ENCODE measurements at regions of chr15 and their contacts with region 1.

Region 1: GRCh38 chr15:73697033-73697467 is 12.9 kb downstream of the CD276 start:
- H3K4me3 Mint-ChIP-seq: no peak overlapping the region
- H3K27ac Mint-ChIP-seq: peak overlapping the region; percentile 80
- H3K4me1 Mint-ChIP-seq: peaks cover 83% of the 10 kb centered on the region
- H3K27me3 Mint-ChIP-seq: peaks cover 72% of the 10 kb centered on the region

Region 2: DNA sequence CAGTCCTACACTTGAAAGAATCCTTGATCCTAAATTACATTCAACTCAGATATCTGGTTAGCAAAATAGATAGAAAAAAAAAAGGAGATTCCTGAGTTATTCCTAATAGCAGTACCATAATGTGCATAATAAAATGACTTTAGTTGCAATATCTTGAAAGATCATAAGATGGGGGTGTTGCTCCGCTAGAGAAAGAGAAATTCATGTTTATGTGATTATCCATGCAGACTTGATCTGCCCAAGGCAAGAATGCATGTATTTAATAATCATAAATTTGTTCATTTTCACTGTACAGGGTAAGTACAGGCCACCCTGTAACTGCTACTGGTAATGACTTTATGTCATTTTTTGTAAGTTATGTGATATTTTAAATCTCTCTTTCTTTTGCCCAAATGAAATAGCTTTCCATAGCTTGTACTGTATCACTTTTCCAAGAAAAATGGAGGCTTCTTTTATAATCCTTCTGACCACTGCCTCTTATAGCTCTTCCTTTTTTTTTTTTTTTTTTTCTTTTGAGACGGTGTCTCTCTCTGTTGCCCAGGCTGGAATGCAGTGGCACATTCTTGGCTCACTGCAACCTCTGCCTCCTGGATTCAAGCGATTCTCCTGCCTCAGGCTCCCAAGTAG is 412.8 kb before region 1 on chr15:
- intact Hi-C with region 1: loop called (anchors 5 kb)
- H3K4me3 Mint-ChIP-seq: no peak overlapping the region
- H3K27ac Mint-ChIP-seq: no peak overlapping the region
- H3K4me1 Mint-ChIP-seq: peaks cover 33% of the 10 kb centered on the region
- H3K27me3 Mint-ChIP-seq: peaks cover 18% of the 10 kb centered on the region

Region 3: DNA sequence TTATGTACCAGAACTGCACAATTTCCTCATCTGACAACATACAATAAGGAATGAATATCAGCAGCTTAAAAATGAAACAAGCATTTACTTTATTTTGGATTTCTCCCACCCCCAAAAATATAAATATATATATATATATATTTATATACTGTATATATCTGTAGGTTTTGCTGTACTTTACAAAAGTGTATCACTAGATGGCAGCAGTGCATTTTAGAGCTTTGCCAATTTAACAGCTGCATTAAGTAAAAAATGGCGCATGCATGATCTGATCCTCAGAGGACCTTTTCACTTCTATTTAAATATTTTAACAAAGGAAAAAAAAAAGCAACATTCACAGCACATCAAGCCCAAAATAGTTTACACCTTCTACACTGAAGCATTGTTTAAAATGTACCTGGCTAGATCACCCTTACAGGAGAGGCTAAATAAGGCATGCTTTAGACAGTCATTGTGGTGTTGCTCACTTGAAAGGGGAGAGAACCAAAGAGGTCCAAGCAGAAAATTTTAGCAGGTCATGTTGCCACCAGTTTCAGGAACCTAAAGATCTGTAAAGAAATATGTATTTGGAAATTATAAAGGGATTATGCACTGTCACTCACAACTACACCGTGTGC is 136.4 kb before region 1 on chr15:
- intact Hi-C with region 1: loop called (anchors 2 kb)
- H3K4me3 Mint-ChIP-seq: no peak overlapping the region
- H3K27ac Mint-ChIP-seq: no peak overlapping the region
- H3K4me1 Mint-ChIP-seq: peaks cover 23% of the 10 kb centered on the region
- H3K27me3 Mint-ChIP-seq: no peaks in the 10 kb centered on the region

Region 4: DNA sequence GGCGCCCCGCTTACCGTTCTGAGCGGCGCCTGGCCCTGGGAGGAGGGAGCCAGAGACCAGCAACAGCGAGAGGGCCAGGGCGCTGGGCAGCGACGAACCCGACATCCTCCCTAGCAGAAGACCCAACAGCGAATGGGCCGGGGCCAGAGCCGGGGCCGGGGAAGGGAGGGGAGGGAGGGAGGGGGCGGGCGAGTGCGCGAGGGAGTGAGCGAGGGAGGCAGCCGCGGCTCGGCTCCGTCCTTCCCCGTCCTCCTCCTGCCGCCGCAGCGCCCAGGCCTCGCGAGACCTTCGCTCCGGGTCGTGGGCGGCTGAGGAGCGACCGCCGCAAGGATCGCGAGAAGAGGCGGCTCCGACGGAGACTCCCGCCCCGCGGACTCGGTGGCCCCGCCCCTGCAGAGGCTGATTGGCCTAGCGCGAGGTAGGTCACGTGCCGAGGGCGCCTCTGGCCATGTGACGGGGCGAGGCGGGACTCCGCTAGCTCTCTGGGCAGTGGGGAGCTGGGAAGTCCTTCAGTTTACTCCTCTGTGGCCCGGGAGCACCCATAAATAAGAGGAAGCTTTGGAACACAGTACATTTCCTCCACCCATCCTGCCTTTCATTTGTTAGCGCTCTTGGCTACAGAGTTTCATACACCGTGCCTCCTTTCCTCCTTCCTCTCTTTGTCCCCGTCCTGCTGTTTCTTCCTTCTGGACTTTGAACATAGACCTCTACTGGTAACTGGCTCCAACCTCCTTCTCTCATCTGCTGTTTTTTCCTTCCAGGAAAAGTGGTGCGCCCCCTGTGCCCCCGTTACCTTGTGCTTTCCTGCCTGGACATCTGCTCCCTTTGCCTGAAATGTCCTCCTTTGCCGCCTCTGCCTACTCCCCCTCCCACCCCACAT is 63.7 kb before region 1 on chr15 and contains the start of gene NPTN:
- intact Hi-C with region 1: loop called (anchors 1 kb)
- H3K4me3 Mint-ChIP-seq: peak within 1 kb of the TSS; percentile 88
- H3K27ac Mint-ChIP-seq: peak within 1 kb of the TSS; percentile 92
- H3K4me1 Mint-ChIP-seq: peaks cover 52% of the 10 kb centered on the region
- H3K27me3 Mint-ChIP-seq: peaks cover 14% of the 10 kb centered on the region

Region 5: DNA sequence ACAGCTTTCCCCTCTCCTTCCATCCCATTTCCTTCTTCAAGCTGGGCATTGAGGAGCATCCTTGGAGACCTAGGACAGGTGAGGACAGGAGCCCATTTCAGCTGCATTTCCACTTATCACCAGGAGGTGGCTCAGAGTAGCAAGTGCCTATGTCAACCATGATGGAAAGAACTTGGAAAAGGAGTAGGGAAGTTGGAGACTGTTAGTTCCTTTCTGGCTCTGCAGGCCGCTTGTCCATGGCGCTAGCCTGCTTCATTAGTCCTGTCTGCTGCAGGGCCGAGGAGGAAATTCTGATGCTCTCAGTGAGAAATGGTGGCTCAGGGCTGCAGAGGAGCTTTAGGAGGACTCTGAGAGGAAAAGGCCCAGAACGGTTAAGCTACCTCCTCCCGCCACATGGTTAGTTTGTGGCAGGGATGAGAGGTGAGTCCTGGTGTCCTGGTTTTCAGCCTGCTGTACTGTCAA is 19.9 kb before region 1 on chr15:
- intact Hi-C with region 1: loop called (anchors 1 kb)
- H3K4me3 Mint-ChIP-seq: no peak overlapping the region
- H3K27ac Mint-ChIP-seq: no peak overlapping the region
- H3K4me1 Mint-ChIP-seq: peaks cover 28% of the 10 kb centered on the region
- H3K27me3 Mint-ChIP-seq: peaks cover 42% of the 10 kb centered on the region

Region 6: GRCh38 chr15:73683777-73684580 is 13.1 kb before region 1 on chr15 and contains the start of gene CD276:
- intact Hi-C with region 1: loop called (anchors 2 kb)
- H3K4me3 Mint-ChIP-seq: peak within 1 kb of the TSS; percentile 94
- H3K27ac Mint-ChIP-seq: peak within 1 kb of the TSS; percentile 87
- H3K4me1 Mint-ChIP-seq: peaks cover 42% of the 10 kb centered on the region
- H3K27me3 Mint-ChIP-seq: peaks cover 60% of the 10 kb centered on the region